ENCODE measurements at regions of chrX and their contacts with region 1.

Region 1: DNA sequence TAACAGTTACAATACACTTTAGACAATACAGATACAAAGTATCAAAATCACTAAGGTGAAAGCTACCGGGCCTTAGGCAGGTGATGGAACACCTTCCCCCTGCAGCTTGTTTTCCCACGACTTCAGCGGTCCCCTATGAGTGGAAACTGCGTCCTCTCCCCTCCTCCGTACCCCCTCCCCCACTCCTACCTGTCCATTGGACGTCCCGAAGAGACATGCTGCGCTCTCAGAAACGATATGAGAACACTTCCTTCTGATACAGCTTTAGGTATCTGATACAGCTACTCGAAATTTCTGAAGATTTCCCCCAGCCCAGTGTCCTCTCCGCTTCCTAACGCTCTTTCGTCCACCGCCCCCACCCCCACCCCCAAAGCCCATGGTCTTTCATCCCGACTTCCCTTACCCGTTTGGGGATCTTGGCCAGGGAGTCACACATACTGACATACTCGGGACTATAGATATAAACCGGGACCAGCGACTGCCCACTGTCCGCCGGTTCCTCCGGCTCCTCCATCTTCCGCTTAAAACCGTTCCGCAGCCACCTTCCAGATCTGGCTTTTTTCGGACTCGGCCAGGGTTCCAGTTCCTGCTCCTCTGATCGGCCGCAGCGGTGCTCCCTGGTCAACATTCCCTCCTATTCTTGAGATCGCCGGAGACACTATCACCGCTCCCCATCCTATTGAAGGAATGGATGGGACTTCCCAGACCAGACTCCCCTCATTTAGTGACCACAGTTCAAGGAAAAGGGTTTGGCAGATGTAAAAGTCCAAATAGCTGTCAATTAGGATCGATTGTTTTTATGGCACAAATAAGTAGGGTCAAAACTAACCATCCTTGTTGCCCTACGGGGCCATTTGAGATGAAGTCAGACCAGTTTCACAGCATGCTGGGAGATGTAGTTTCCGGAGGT is at the start of gene HDAC8:
- DNase-seq: peak; percentile 85
- H3K4me3 ChIP-seq: peak within 1 kb of the TSS; percentile 44 to 75 (median 61)
- H3K27ac ChIP-seq: peak within 1 kb of the TSS; percentile 73
- H3K4me1 ChIP-seq: peaks cover 12% of the 10 kb centered on the region
- H3K27me3 ChIP-seq: no peaks in the 10 kb centered on the region
- CTCF ChIP-seq: no peak
- POLR2A ChIP-seq: no peak
- total RNA-seq, gene HDAC8: 37.2 and 38.9 TPM in 2 replicates

Region 2: GRCh38 chrX:72714476-72714916 is 142.0 kb after region 1 on chrX:
- CTCF ChIA-PET with region 1: no interaction called
- POLR2A ChIA-PET with region 1: no interaction called
- dilution Hi-C with region 1: no loop called
- intact Hi-C with region 1: loop called (anchors 2 kb)
- DNase-seq: peak; percentile 68
- H3K4me3 ChIP-seq: peak overlapping the region; percentile 34 to 79 (median 44)
- H3K27ac ChIP-seq: peak overlapping the region; percentile 57
- H3K4me1 ChIP-seq: peaks cover 10% of the 10 kb centered on the region
- H3K27me3 ChIP-seq: no peaks in the 10 kb centered on the region
- CTCF ChIP-seq: peak in 1 of 2 donors; percentile 5
- POLR2A ChIP-seq: no peak